ENCODE measurements at regions of chr12 and their contacts with region 1.

Region 1: GRCh38 chr12:6851921-6852650 is at the start of gene USP5:
- DNase-seq: peak; percentile 99
- ATAC-seq: peak; percentile 79
- H3K4me3 Mint-ChIP-seq: peak within 1 kb of the TSS; percentile 95
- H3K27ac Mint-ChIP-seq: peak within 1 kb of the TSS; percentile 100
- H3K4me1 Mint-ChIP-seq: peaks cover 19% of the 10 kb centered on the region
- H3K27me3 Mint-ChIP-seq: no peaks in the 10 kb centered on the region
- CTCF ChIP-seq: no peak
- total RNA-seq, gene USP5: 141 to 158 TPM (median 149 TPM) in 3 replicates

Region 2: GRCh38 chr12:6764011-6764828 is 87.9 kb before region 1 on chr12:
- CTCF ChIA-PET with region 1: interaction called, 27 read pairs
- POLR2A ChIA-PET with region 1: interaction called, 7 read pairs
- DNase-seq: peak; percentile 96
- ATAC-seq: peak; percentile 56
- H3K4me3 Mint-ChIP-seq: peak overlapping the region; percentile 62
- H3K27ac Mint-ChIP-seq: peak overlapping the region; percentile 89
- H3K4me1 Mint-ChIP-seq: peaks cover 56% of the 10 kb centered on the region
- H3K27me3 Mint-ChIP-seq: peaks cover 7% of the 10 kb centered on the region
- CTCF ChIP-seq: no peak

Region 3: DNA sequence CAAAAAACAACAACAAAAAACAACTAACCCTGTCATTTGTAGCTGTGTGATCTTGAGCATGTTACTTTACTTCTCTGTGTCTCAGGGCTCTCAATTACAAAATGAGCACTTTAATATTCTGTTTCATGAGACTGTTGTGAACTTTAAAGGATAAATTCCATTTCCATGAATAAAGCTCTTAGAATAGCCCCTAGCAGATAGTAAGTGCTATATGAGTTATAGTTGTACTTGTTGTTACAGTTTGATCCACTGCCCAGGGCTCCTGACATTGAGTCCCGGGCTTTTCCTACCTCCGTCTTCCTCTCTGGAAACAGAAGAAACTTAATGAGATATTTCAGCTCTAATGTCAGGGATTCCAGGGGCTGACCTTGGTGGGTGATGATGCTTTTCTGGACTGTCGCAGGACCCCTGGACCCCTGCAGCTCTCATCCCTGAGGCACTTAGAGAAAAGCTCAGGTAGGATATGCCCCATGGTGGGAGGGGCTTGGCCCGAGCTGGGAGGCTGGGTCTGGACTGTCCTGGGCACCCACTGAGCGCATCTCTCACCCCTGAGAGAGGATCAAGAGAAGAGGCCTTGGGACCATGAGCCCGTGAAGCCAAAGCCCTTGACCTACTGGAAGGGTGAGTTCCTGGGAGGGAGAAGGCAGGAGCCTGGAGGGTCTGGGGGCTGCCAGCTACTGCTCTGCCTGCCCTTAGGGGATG is 18.7 kb before region 1 on chr12:
- CTCF ChIA-PET with region 1: interaction called, 54 read pairs
- POLR2A ChIA-PET with region 1: interaction called, 6 read pairs
- DNase-seq: no peak
- ATAC-seq: no peak
- H3K4me3 Mint-ChIP-seq: no peak overlapping the region
- H3K27ac Mint-ChIP-seq: no peak overlapping the region
- H3K4me1 Mint-ChIP-seq: peaks cover 18% of the 10 kb centered on the region
- H3K27me3 Mint-ChIP-seq: no peaks in the 10 kb centered on the region
- CTCF ChIP-seq: no peak

Region 4: DNA sequence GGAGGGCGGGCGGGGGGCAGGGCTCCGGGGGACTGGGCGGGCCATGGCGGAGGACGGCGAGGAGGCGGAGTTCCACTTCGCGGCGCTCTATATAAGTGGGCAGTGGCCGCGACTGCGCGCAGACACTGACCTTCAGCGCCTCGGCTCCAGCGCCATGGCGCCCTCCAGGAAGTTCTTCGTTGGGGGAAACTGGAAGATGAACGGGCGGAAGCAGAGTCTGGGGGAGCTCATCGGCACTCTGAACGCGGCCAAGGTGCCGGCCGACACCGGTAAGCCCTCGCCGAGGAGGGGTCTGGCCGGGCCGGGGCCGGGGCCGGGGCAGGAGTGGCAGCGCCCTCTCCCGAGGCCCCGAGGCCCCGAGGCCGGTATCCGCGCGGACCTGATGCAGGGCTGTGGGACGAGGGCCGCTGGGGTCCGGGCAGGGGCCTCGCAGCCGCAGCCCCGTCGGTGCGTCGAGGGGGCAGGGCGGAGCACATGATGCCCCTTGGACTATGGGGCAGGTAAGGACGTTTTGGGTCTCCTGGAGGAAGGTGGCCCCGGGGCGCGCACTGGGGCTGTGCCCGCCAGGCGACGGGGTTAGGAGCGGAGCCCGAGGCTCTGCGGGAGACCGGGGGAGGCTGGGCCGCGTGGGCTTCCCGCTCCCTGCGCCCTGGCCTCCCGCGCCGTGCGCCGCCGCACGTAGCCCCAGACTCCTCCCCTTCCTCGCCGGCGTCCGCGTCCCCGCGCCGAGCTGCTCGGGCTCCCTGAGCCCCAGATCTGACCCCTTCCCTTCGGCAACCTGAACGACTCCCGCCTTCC is 15.5 kb after region 1 on chr12 and contains the start of gene TPI1:
- CTCF ChIA-PET with region 1: interaction called, 181 read pairs
- POLR2A ChIA-PET with region 1: interaction called, 33 read pairs
- DNase-seq: peak; percentile 79
- ATAC-seq: peak; percentile 63
- H3K4me3 Mint-ChIP-seq: peak within 1 kb of the TSS; percentile 89
- H3K27ac Mint-ChIP-seq: peak within 1 kb of the TSS; percentile 87
- H3K4me1 Mint-ChIP-seq: peaks cover 60% of the 10 kb centered on the region
- H3K27me3 Mint-ChIP-seq: no peaks in the 10 kb centered on the region
- CTCF ChIP-seq: no peak
- total RNA-seq, gene TPI1: 1,045 to 1,242 TPM (median 1,195 TPM) in 3 replicates

Region 5: DNA sequence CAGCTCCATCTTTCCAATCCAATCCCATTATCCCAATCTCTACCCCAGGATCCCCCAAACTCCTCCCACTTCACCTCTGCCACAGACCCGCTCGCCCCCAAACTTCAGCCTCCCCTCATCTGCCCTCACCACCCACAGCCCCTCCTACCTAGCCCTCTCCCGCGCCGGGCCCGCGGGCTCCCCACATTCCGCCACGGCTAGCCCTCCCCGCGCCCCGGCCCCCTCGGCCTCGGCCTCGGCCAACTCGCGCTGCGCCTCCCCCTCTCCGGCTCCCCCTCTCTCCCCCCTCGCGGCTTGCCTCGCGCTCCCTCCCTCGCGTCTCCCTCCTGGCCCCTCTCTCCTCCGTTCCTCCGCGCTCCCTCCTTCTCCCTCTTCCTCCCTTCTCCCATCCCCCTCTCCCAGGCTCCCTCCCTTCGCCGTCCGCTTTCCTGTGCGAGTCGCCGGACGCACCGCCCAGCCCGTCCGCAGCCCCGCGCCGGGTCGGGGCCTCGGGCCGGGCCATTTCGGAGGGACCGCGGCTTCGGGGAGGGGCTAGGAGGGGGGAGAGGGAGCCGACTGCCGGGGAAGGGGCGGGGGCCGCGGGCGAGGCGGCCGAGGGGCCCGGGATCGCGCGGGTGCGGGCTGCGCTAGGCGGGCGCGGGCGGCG is 75.4 kb after region 1 on chr12 and contains the start of gene ATN1:
- CTCF ChIA-PET with region 1: interaction called, 11 read pairs
- POLR2A ChIA-PET with region 1: interaction called, 6 read pairs
- DNase-seq: peak; percentile 86
- ATAC-seq: peak; percentile 19
- H3K4me3 Mint-ChIP-seq: peak within 1 kb of the TSS; percentile 94
- H3K27ac Mint-ChIP-seq: peak within 1 kb of the TSS; percentile 98
- H3K4me1 Mint-ChIP-seq: peaks cover 58% of the 10 kb centered on the region
- H3K27me3 Mint-ChIP-seq: no peaks in the 10 kb centered on the region
- CTCF ChIP-seq: no peak
- total RNA-seq, gene ATN1: 80.0 to 87.1 TPM (median 80.5 TPM) in 3 replicates

Region 6: DNA sequence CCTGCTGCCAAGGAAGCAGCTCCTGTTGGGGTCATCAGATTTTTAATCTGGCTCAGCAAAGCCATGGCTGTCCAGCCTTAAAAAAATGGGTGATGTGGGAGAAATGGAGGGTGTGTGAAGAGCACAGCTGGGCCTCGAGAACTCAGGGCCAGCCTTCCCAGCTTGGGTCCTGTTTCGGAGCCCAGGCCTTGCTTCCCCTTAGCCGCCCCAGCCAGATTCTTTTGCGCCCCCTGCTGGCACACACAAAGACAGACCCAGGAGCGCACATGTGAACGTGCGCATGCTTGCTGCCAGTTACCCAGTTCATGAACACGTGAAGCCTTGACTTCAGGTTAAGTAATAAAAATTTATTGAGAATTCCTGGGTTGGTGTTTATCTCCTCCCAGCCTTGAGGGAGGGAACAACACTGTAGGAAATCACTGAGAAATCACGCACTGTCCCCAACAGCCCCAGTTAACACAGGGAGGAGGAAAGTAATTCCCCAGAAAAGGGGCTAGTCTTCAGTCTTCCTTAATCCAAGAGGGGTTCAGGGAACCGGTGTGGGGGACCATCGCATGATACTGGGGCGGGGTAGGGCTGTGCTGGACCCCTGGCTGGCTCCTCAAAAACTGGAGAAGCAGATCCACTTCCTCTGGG is 113.1 kb after region 1 on chr12:
- CTCF ChIA-PET with region 1: interaction called, 12 read pairs
- POLR2A ChIA-PET with region 1: no interaction called
- DNase-seq: peak; percentile 85
- ATAC-seq: peak; percentile 25
- H3K4me3 Mint-ChIP-seq: peak overlapping the region; percentile 75
- H3K27ac Mint-ChIP-seq: peak overlapping the region; percentile 95
- H3K4me1 Mint-ChIP-seq: peaks cover 60% of the 10 kb centered on the region
- H3K27me3 Mint-ChIP-seq: no peaks in the 10 kb centered on the region
- CTCF ChIP-seq: peak; percentile 71